ENCODE measurements at regions of chr1 and their contacts with region 1.

Region 1: DNA sequence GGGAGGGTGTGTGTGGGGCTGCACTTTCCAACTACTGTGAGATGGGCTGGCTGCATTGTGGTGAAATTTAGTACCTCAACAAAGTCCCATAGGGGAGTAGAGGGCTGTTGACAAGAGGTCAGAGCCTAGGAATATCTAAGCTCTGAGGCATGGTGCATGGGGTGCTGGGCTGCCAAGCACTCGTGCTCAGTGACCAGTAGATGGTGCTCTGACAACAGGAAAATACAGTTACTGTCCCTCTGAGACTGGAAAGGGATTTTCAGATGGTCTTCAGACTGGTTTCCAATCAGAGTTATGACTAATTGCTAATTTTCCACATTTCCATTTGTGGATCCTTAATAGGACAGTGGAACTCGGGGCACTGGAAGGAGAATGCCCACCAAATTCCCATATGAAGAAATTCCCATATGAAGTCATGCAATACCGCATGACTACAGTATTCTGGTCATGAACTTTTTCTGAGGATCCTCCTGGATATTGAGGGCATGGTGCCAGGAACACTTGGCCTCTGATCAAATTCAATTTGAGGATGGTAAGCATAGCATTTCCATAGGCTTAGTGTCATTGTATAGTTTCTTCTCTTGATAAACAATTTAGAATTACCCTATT is 4.1 kb upstream of the CACNA1E start:
- DNase-seq: peak in 1 of 2 experiments; percentile 53
- H3K4me3 ChIP-seq: no peak overlapping the region
- H3K27ac ChIP-seq: no peak overlapping the region
- H3K4me1 ChIP-seq: peaks cover 2 to 14% (median 8%) of the 10 kb centered on the region in 4 experiments; a peak in 6 of 7 replicates
- H3K27me3 ChIP-seq: peaks cover 19 to 38% (median 34%) of the 10 kb centered on the region in 4 experiments
- CTCF ChIP-seq: peak; percentile 85 to 94 (median 86)
- EP300 ChIP-seq: no peak
- POLR2A ChIP-seq: no peak
- RAD21 ChIP-seq: peak; percentile 95 to 96

Region 2: DNA sequence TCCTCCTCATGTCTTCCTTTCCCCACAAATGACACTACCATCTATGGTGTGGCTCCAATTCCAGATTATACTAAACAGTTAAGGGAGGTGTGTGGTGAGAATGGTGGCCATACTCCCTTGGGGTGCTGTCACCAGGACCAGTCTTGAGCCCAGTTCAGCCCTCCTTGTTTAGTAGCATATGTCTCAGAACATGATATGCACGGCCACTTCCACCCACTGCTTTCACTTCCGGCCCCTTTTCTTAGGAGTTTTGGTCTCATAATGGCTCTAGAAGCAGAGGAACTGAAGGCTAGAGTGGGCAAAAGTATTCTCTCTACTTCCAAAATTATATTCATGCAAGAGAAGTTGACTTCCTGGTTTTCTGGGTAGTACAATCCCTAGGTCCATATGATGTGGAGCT is 41.2 kb before region 1 on chr1:
- CTCF ChIA-PET with region 1: no interaction called
- POLR2A ChIA-PET with region 1: no interaction called
- DNase-seq: no peak
- H3K4me3 ChIP-seq: no peak overlapping the region
- H3K27ac ChIP-seq: no peak overlapping the region
- H3K4me1 ChIP-seq: 0 out of 7 replicates have a peak, but pooled peaks cover 0 to 4% (median 0%) of the 10 kb centered on the region in 4 experiments
- H3K27me3 ChIP-seq: no peaks in the 10 kb centered on the region
- CTCF ChIP-seq: no peak
- EP300 ChIP-seq: no peak
- POLR2A ChIP-seq: no peak
- RAD21 ChIP-seq: no peak

Region 3: GRCh38 chr1:181452754-181453153 is 26.5 kb before region 1 on chr1:
- CTCF ChIA-PET with region 1: no interaction called
- POLR2A ChIA-PET with region 1: no interaction called
- DNase-seq: no peak
- H3K4me3 ChIP-seq: no peak overlapping the region
- H3K27ac ChIP-seq: no peak overlapping the region
- H3K4me1 ChIP-seq: no peaks in the 10 kb centered on the region
- H3K27me3 ChIP-seq: peaks cover 0 to 2% (median 0%) of the 10 kb centered on the region in 4 experiments; a peak in 2 of 7 replicates
- CTCF ChIP-seq: no peak
- EP300 ChIP-seq: no peak
- POLR2A ChIP-seq: no peak
- RAD21 ChIP-seq: no peak

Region 4: GRCh38 chr1:181490740-181491712 is 11.8 kb after region 1 on chr1:
- CTCF ChIA-PET with region 1: interaction called, 11 read pairs
- POLR2A ChIA-PET with region 1: interaction called, 3 read pairs
- DNase-seq: no peak
- H3K4me3 ChIP-seq: no peak overlapping the region
- H3K27ac ChIP-seq: no peak overlapping the region
- H3K4me1 ChIP-seq: peaks cover 0 to 4% (median 0%) of the 10 kb centered on the region in 4 experiments; a peak in 1 of 7 replicates
- H3K27me3 ChIP-seq: peaks cover 0 to 16% (median 5%) of the 10 kb centered on the region in 4 experiments; a peak in 6 of 7 replicates
- CTCF ChIP-seq: no peak
- EP300 ChIP-seq: no peak
- POLR2A ChIP-seq: no peak
- RAD21 ChIP-seq: no peak

Region 5: GRCh38 chr1:181497870-181498269 is 18.6 kb after region 1 on chr1:
- CTCF ChIA-PET with region 1: interaction called, 30 read pairs
- POLR2A ChIA-PET with region 1: interaction called, 3 read pairs
- DNase-seq: no peak
- H3K4me3 ChIP-seq: no peak overlapping the region
- H3K27ac ChIP-seq: no peak overlapping the region
- H3K4me1 ChIP-seq: no peaks in the 10 kb centered on the region; a peak in 1 of 7 replicates
- H3K27me3 ChIP-seq: peaks cover 0 to 1% (median 0%) of the 10 kb centered on the region in 4 experiments; a peak in 1 of 7 replicates
- CTCF ChIP-seq: no peak; a peak in 1 of 4 replicates
- EP300 ChIP-seq: no peak
- POLR2A ChIP-seq: no peak
- RAD21 ChIP-seq: peak in 1 of 2 experiments; percentile 12; a peak in 1 of 4 replicates

Region 6: GRCh38 chr1:181504399-181504842 is 25.2 kb after region 1 on chr1:
- CTCF ChIA-PET with region 1: interaction called, 30 read pairs
- POLR2A ChIA-PET with region 1: interaction called, 3 read pairs
- DNase-seq: peak; percentile 21 to 52
- H3K4me3 ChIP-seq: no peak overlapping the region
- H3K27ac ChIP-seq: no peak overlapping the region
- H3K4me1 ChIP-seq: no peaks in the 10 kb centered on the region; a peak in 1 of 7 replicates
- H3K27me3 ChIP-seq: peaks cover 0 to 1% (median 0%) of the 10 kb centered on the region in 4 experiments; a peak in 1 of 7 replicates
- CTCF ChIP-seq: peak; percentile 59 to 91 (median 59)
- EP300 ChIP-seq: no peak
- POLR2A ChIP-seq: no peak
- RAD21 ChIP-seq: peak; percentile 50 to 68

Region 7: GRCh38 chr1:181676269-181676668 is 197.0 kb after region 1 on chr1:
- CTCF ChIA-PET with region 1: interaction called, 66 read pairs
- POLR2A ChIA-PET with region 1: no interaction called
- DNase-seq: peak in 1 of 2 experiments; percentile 52
- H3K4me3 ChIP-seq: no peak overlapping the region
- H3K27ac ChIP-seq: no peak overlapping the region
- H3K4me1 ChIP-seq: peaks cover 0 to 5% (median 2%) of the 10 kb centered on the region in 4 experiments; a peak in 4 of 7 replicates
- H3K27me3 ChIP-seq: no peaks in the 10 kb centered on the region
- CTCF ChIP-seq: peak in 2 of 3 experiments; percentile 67 to 73; a peak in 3 of 4 replicates
- EP300 ChIP-seq: no peak
- POLR2A ChIP-seq: no peak
- RAD21 ChIP-seq: peak; percentile 82 to 87

Region 8: DNA sequence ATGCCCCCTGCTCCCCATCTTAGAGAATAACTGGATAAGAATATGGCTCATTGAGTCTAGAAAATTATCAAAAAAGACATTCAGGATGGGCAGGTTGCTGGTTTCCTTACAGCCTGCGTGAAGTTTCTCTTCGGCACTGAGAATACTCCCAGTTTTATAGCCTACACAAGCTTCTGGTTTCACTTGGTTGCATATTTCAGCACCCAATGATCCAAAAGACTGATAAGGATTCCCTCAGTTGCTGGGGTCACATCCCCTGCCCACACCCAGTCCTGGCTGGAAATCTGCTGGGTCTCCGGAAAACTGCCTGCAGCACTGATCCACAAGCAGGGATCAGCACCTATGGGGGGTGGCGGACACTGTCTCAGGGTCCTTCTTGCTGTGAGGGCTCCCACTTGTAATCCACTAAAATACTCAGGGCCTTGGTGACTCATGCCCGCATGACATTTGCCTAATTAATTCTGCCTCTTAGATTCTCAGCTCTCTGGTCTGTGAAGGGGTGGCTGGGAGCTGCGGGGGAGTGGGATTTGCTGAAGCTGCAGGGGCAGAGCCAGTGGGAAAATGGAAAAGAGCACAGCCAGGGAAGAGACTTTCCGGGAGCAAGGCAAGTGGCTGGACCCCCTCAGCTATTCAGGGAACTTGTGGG is 439.8 kb after region 1 on chr1:
- CTCF ChIA-PET with region 1: interaction called, 10 read pairs
- POLR2A ChIA-PET with region 1: interaction called, 3 read pairs
- DNase-seq: peak in 1 of 2 experiments; percentile 49
- H3K4me3 ChIP-seq: no peak overlapping the region
- H3K27ac ChIP-seq: no peak overlapping the region
- H3K4me1 ChIP-seq: peaks cover 0 to 3% (median 1%) of the 10 kb centered on the region in 4 experiments; a peak in 4 of 7 replicates
- H3K27me3 ChIP-seq: no peaks in the 10 kb centered on the region
- CTCF ChIP-seq: no peak
- EP300 ChIP-seq: no peak
- POLR2A ChIP-seq: no peak
- RAD21 ChIP-seq: no peak

Measured in H1 (cell line).